Activated CD4-positive, alpha-beta memory T cell treated with anti-CD3 and anti-CD28 coated beads for 36 hours (primary cell): ENCODE measurements at regions of chr20 and their contacts with region 1.

Region 1: DNA sequence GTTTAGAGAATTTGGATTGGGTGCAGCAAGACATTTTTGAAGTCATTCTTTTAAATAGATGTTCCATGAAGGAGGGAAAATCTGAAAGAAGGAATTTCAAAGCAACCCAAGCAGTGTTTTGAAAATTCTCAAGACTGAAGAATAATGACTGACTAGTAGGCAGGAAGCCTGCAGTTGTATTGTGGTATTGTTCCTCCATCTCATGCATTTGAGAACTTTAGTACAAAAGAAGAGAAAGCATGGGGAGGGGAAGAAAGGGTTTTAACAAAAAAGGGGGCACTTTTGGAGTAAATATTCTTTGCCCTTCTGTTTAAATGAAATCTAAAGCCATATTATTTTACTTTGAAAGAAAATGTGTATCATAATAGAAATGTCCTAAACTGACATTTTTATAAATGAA is 6.6 kb downstream of the NCOA3 start:
- DNase-seq: no peak
- H3K4me3 Mint-ChIP-seq: peak overlapping the region; percentile 43
- H3K27ac Mint-ChIP-seq: peak overlapping the region; percentile 69
- H3K4me1 Mint-ChIP-seq: peaks cover 77% of the 10 kb centered on the region
- H3K27me3 Mint-ChIP-seq: no peaks in the 10 kb centered on the region

Region 2: DNA sequence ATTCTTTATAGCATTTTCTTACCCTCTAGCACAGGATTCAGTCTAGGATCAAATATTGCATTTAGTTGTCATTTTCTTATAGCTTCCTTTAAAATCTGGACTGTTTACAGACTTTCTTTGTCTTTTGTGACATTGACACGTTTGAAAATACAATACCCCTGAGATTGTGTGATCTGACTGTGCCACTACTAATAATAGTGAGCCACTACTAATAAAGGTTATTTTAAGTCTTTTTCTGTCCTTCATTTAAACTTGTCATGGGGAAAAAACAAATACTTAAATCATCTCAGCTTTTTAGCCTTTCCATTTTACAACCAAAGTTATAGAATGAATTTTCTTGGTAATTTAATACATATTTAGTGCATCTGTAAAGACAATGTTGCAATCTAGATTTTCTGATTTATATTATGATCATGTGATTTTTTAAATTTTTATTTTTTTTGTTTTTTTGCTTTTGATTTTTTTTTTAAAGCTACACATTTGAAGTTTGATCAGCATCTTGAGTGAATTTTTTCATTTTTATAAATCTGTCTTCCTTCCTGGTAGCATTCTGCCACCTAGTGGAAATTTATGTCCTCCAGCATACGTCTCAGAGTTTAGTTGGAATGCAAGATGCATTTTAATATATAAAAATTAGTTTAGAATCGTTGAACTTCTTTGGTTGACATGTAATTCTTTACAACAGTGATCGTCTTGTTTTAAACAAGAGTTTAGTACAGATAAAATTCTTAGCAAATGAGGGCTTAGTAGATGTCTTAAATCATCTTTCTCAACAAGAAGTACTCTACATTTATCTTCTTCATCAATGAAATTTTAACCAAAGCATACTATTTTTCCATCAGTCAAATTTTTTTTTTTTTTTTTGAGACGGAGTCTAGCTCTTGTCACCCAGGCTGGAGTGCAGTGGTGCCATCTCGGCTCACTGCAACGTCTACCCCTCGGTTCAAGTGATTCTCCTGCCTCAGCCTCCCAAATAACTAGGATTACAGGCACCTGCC is 112.8 kb after region 1 on chr20:
- CTCF ChIA-PET with region 1: interaction called, 25 read pairs
- POLR2A ChIA-PET with region 1: no interaction called
- intact Hi-C with region 1: no loop called
- DNase-seq: no peak
- H3K4me3 Mint-ChIP-seq: no peak overlapping the region
- H3K27ac Mint-ChIP-seq: peak overlapping the region; percentile 11
- H3K4me1 Mint-ChIP-seq: peaks cover 33% of the 10 kb centered on the region
- H3K27me3 Mint-ChIP-seq: no peaks in the 10 kb centered on the region